BJ (cell line): ENCODE measurements at regions of chr12 and their contacts with region 1.

Region 1: DNA sequence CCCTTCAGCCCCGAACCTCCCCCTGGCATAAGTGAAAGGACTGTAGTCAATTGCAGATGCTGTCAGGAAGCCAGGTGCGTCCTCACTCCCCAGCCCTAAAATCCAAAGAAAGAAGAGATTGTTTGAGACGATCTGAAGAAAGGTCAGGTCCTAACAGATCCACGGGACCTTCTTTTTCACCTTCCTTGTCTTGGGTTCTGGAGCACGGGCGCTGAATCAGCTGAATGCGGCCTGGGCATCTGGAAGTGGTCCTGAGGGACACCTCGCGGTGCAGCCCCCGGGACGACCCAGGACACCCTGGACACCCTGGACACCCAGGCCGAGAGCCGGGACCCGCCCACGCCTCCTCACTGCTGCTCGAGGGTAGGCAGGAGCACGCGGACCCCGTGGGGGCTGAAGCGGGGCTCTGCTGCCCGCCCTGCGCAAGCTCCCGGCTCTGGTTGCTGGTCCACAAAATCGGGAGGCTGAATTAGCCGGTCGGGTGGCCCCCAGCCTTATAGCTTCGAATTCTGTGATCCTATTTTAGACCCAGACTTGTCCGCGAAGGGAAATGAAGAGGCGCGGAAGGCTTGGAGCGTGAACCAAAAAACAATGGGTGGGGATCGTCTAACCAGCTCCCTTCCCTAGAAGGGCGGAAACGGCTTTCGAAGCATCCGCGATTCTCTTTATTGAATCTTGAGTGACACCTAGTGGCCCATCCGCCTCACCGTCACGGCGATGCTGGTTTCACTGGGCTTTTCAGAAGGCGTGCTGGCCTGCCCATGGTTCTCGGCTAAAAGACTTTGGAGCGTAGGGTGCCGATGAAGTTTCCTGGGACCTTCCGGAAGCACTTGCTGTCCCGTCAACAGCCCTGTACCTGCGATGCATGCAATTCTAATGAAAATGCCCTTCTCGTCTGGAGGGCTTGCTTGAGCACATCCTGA is 46.4 kb upstream of the PLXNC1 start:
- DNase-seq: no peak
- H3K4me3 ChIP-seq: peak overlapping the region; percentile 56
- H3K27me3 ChIP-seq: peaks cover 2% of the 10 kb centered on the region; the same call in 1 of the 2 replicates
- CTCF ChIP-seq: peak; percentile 78

Region 2: DNA sequence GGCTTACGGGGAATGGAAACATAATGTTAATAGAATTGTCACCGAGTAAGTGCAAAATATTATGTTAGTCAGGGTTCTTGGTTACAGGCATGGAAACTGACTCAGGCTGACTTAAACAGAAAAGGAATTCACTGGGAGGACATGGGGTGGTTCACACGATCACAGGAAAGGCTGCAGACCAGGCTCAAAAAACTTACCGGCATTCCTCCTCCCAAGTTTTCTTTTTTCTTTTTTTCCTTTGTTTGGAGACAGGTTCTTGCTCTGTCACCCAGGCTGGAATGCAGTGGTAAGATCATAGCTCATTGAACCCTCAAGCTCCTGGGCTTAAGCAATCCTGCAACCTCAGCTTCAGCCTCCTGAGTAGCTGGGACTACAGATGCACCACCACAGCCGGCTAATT is 648.4 kb before region 1 on chr12:
- CTCF ChIA-PET with region 1: no interaction called
- POLR2A ChIA-PET with region 1: no interaction called
- DNase-seq: peak; percentile 19
- H3K4me3 ChIP-seq: no peak overlapping the region
- H3K27me3 ChIP-seq: no peaks in the 10 kb centered on the region
- CTCF ChIP-seq: no peak

Region 3: DNA sequence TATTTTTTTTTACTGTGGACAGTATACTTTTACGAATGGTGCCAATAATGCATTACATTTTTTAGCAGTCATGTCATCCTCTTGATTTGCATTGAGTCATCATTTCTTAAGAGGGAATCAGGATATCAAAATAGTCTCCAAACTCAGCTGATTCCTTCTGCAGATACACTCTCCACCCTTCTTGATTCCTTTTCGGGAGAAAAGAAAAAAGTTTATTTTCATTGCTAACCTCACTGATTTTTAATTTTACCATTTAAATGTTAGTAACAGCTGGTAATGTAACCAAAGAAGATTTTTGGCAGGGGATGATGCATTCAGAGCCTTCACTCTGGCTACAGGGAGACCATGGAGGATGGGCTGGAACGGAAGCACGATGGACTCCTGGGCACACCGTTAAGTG is 587.1 kb before region 1 on chr12:
- CTCF ChIA-PET with region 1: interaction called, 154 read pairs
- POLR2A ChIA-PET with region 1: no interaction called
- DNase-seq: peak; percentile 13
- H3K4me3 ChIP-seq: no peak overlapping the region
- H3K27me3 ChIP-seq: no peaks in the 10 kb centered on the region
- CTCF ChIP-seq: no peak

Region 4: DNA sequence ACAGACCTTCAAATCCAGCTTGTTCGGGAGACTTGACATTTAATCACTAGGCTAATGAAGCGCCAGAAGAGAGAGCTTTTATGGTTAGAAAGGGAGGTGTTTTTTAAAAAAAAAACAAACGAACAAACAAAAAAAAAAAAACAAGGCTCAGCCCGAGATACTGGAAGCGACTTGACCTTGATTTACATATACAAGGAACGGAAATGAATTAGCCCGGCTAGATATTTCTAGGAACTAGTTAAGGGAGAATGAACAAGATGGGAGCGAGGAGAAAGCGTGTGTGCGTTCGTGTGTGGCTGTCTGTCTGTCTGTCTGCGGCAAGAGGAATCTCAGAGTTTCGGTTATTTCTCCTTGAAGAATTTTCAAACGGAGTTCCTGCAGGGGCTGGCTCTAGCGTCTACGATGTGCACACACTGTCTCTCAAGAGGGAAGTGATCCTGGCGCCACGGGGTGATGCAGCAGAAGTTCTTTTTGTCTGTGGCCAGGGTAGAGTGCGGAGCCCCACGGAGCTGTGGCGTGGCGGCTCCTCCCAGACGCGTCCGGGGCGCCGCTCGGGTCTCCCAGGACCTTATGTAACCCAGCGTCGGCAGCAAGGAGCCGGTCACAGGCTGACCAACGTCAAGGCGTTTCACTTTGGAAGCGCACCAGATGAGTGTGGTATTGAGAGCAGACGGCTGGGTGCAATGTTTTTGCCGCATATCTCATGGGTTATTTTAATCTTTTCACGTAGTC is 510.7 kb before region 1 on chr12:
- CTCF ChIA-PET with region 1: interaction called, 12 read pairs
- POLR2A ChIA-PET with region 1: no interaction called
- DNase-seq: peak; percentile 43
- H3K4me3 ChIP-seq: peak overlapping the region; percentile 45
- H3K27me3 ChIP-seq: no peaks in the 10 kb centered on the region
- CTCF ChIP-seq: no peak

Region 5: DNA sequence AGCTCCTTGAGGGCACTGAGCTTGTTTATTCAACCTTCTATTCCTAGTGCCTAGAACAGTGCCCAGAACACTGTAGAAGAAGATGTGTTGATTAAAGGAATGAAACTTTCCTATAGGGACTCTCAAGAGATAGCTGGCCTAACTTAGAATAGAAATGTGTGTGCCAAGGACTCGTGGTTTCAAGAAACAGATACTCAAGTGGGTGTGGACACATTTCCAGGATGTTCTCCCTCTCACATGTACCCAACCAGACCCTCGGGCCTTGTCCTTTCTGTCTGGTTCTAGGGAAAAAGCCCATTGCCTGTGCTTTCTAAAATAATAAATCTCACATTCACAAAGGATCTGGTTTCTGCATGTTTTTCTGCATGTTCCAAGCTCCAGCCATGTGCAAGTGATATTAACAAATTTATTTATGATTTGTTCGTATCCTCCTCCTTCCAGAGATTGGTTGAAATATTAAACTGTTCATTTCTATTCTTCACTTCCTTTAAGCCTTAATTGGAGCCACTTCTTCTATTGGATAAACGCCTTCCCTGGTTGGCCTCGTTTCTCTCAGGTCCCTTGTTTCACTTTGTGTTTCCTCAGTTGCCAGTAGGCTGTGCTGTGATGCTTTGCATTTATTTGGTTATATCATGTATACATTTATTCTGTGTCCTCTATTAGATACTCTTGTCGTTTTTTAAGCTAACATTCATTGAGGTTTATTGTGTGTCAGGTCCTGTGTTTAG is 335.0 kb before region 1 on chr12:
- CTCF ChIA-PET with region 1: interaction called, 85 read pairs
- POLR2A ChIA-PET with region 1: no interaction called
- DNase-seq: no peak
- H3K4me3 ChIP-seq: no peak overlapping the region
- H3K27me3 ChIP-seq: no peaks in the 10 kb centered on the region
- CTCF ChIP-seq: peak; percentile 58

Region 6: GRCh38 chr12:93790472-93791152 is 311.4 kb before region 1 on chr12:
- CTCF ChIA-PET with region 1: interaction called, 13 read pairs
- POLR2A ChIA-PET with region 1: no interaction called
- DNase-seq: no peak
- H3K4me3 ChIP-seq: no peak overlapping the region
- H3K27me3 ChIP-seq: no peaks in the 10 kb centered on the region
- CTCF ChIP-seq: no peak

Region 7: GRCh38 chr12:93886533-93887511 is 215.2 kb before region 1 on chr12:
- CTCF ChIA-PET with region 1: interaction called, 52 read pairs
- POLR2A ChIA-PET with region 1: no interaction called
- DNase-seq: peak; percentile 94
- H3K4me3 ChIP-seq: no peak overlapping the region
- H3K27me3 ChIP-seq: no peaks in the 10 kb centered on the region
- CTCF ChIP-seq: no peak

Region 8: DNA sequence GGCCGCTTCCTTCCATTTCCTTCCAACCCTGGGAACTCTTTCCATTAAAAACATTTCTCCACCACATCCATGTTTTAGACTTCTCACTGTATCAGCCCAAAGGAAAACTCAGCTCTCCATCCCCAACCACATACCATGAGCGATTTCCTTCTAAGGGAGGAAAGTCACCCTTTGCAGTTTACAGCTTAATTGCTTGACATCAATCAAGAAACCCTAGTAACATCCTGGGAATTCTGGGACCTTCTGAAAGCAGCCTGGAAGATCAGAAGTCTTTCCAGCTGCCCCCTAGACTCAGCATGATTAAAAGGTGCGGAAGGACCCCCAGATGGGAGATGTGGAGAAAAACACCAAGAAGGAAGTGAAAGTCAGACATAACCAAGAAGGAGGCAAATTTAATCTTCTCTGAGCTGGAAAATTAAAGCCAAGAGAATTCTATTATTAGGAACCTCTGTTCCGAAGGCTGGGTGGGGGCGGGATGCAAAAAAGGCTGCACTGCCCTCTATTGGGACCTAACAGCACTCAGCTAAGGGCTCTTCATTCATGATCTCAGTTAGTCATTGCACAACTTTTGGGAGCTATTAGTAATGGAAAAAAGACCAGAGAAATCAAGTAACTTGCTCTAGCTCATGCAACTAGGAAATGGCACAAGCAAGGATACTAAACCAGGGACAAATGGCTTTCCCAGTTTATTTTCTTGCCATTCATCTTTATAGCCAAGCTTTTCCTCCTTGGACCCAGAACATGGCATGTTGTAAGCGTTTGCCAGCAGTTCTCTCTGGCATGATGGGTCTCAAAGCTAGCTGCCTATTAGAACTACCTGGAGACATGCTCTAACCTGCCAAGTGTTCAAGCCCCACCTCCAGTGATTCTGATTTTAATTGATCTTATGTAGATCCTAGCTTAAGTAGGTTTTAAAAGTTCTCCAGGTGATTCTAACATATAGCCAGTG is 26.7 kb before region 1 on chr12:
- CTCF ChIA-PET with region 1: interaction called, 68 read pairs
- POLR2A ChIA-PET with region 1: interaction called, 3 read pairs
- DNase-seq: peak; percentile 63
- H3K4me3 ChIP-seq: no peak overlapping the region
- H3K27me3 ChIP-seq: no peaks in the 10 kb centered on the region
- CTCF ChIP-seq: peak; percentile 87

Region 9: DNA sequence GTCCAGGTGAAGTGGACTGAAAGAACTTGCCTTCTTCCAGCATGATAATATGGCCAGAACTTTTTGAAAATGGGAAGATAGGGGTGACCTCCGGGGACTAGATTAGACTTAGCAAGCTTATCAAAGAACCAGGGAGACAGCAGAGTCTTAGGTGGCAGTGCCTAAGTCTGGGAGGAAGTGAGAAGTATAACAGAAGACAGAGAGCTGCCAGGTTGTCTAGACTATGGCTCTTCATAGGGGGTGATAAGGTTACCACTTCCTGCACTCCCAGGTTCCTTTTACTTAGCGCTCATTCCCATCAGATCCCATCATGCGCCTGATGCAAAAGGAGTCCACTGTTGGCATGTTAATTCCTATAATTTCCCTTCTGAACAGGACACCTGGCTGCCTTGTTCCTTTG is 116.2 kb after region 1 on chr12:
- CTCF ChIA-PET with region 1: no interaction called
- POLR2A ChIA-PET with region 1: no interaction called
- DNase-seq: no peak
- H3K4me3 ChIP-seq: no peak overlapping the region
- H3K27me3 ChIP-seq: no peaks in the 10 kb centered on the region
- CTCF ChIP-seq: no peak

Region 10: GRCh38 chr12:94244165-94245133 is 142.4 kb after region 1 on chr12:
- CTCF ChIA-PET with region 1: no interaction called
- POLR2A ChIA-PET with region 1: no interaction called
- DNase-seq: no peak
- H3K4me3 ChIP-seq: no peak overlapping the region
- H3K27me3 ChIP-seq: no peaks in the 10 kb centered on the region; the same call in 1 of the 2 replicates
- CTCF ChIP-seq: no peak